ENCODE measurements at regions of chr12 and their contacts with region 1.

Region 1: DNA sequence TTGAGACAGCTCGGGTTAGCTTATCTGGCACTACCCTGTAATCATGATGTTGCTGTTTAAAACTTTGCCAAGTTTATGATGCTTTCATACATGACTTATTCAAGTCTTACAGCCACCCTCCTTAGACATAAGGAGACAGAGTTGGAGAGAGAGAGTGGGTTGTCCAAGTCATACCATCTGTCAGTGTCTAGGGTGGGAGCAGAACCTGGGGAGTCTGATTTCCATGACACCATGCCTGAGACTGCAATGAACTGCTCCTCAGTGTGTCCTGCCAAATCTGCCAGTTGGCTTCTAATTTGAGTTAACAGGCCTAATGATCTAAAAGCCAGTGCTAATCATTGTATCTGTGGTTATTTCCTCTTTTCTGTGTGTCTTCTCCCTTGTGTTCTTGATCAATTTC is 43.7 kb upstream of the PHC1 start:
- DNase-seq: no peak
- H3K4me3 ChIP-seq: no peak overlapping the region
- H3K27me3 ChIP-seq: no peaks in the 10 kb centered on the region
- CTCF ChIP-seq: no peak

Region 2: DNA sequence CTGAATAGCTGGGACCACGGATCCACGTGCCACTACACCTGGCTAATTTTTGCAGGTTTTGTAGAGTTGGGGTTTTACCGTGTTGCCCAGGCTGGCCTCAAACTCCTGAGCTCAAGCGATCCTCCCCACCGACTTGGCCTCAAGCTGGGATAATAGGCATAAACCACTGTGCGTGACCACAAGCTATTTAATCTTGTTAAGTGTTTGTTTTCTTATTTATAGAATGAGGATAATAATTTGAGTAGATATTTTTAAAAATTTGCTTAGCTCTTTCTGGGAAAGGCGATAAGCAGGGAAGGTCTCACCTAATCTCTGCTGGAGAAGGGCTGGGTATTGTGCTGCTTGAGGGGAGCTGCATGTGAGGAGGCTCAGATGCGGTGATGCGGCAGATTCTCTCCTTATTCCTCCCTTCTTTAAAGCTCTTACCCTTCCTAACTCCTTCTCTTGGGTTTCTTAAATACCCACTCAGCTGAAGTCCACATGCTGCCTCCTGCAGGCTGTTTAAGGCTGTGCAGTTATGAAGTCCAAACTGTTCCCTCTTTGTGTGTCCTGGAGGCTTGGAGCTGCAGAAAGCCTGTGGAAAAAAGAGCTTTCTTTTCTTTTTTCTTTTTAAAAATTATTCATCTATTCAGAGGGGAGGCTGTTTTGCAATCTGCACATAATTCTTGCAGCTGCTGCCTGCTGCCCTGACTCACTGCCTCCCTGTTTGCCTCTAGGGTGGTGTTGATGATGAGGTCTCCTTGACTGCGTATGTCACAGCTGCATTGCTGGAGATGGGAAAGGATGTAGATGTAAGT is 10.2 kb before region 1 on chr12:
- CTCF ChIA-PET with region 1: interaction called, 14 read pairs
- POLR2A ChIA-PET with region 1: no interaction called
- DNase-seq: no peak
- H3K4me3 ChIP-seq: no peak overlapping the region
- H3K27me3 ChIP-seq: no peaks in the 10 kb centered on the region
- CTCF ChIP-seq: peak; percentile 70

Measured in BJ (cell line).